PC-3 (cell line): ENCODE measurements at regions of chr14 and their contacts with region 1.

Region 1: DNA sequence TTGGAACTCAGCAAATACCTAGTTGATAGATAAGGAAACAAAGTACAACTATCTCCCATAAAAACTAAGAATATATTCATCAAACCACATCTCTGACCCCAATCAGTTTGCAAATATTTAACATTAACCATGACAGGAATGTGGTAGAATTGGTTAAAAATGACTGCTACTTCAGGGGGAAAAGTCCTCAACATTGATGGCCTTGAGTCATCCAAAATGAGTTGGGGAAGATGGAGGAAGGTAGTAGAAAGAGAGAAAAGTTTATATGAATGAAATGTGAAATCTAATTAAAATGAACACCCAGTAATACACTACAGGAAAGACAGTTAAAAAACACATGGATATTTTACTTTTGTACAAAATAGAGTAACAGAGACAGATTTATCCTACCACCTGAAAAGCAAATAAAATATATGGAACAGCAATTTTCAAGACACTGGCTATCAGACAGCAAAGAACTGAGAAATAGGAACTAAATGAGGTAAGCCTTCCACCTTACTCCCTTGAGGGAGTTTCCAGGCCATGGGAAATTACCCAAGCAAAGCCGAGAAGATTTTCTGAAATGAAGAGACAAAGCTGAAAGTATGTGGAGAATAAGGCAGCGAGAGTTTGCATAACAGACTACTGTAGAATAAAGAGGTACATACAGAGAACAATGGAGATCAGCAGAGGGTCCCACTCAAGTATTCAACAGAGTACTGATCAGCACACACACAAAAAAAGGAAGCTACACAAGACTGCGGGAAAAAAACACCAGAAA is 49.6 kb downstream of the TC2N start:
- DNase-seq: no peak
- ATAC-seq: no peak
- H3K4me3 ChIP-seq: no peak overlapping the region
- H3K27ac ChIP-seq: no peak overlapping the region
- H3K4me1 ChIP-seq: no peaks in the 10 kb centered on the region
- H3K27me3 ChIP-seq: peaks cover 29% of the 10 kb centered on the region
- CTCF ChIP-seq: no peak

Region 2: DNA sequence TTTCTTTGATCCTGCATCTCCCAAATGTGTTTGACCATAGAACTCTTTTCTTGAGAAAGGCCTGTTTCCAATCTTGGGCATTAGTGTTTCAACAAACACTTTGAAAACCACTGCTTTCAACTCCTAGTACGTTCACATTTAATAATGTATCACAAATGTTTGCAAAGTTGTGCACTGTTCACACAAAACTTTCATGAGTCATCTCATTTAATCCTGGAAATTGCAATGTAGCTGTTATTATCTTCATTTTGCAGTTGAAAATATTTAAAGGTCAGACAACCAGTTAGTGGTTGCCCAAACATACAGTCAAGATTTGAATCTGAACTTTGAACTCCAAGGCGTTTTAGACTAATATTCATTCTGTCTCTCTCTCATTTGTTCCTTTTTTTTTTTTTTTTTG is 20.0 kb after region 1 on chr14:
- CTCF ChIA-PET with region 1: no interaction called
- POLR2A ChIA-PET with region 1: interaction called, 12 read pairs
- intact Hi-C with region 1: no loop called
- DNase-seq: no peak
- ATAC-seq: no peak
- H3K4me3 ChIP-seq: no peak overlapping the region
- H3K27ac ChIP-seq: no peak overlapping the region
- H3K4me1 ChIP-seq: peaks cover 5% of the 10 kb centered on the region; the same call in 1 of the 2 replicates
- H3K27me3 ChIP-seq: peaks cover 43% of the 10 kb centered on the region
- CTCF ChIP-seq: no peak